CD8-positive, alpha-beta memory T cell (primary cell): ENCODE measurements at regions of chr14 and their contacts with region 1.

Region 1: GRCh38 chr14:102605025-102605424 is 12.6 kb downstream of the RCOR1 start:
- DNase-seq: no peak
- H3K4me3 ChIP-seq: no peak overlapping the region
- H3K4me3 Mint-ChIP-seq: no peak overlapping the region
- H3K27ac ChIP-seq: no peak overlapping the region
- H3K27ac Mint-ChIP-seq: no peak overlapping the region
- H3K4me1 ChIP-seq: peaks cover 6% of the 10 kb centered on the region
- H3K4me1 Mint-ChIP-seq: peaks cover 20 to 47% (median 29%) of the 10 kb centered on the region in 3 donors
- H3K27me3 ChIP-seq: no peaks in the 10 kb centered on the region
- H3K27me3 Mint-ChIP-seq: no peaks in the 10 kb centered on the region

Region 2: GRCh38 chr14:102593062-102593824 is 11.8 kb before region 1 on chr14:
- CTCF ChIA-PET with region 1: interaction called, 10 read pairs
- POLR2A ChIA-PET with region 1: no interaction called
- DNase-seq: peak; percentile 39 to 74 (median 56)
- H3K4me3 ChIP-seq: peak overlapping the region; percentile 74
- H3K4me3 Mint-ChIP-seq: peak overlapping the region; percentile 77 to 90 (median 83)
- H3K27ac ChIP-seq: peak overlapping the region; percentile 54
- H3K27ac Mint-ChIP-seq: peak overlapping the region; percentile 26 to 95 (median 82)
- H3K4me1 ChIP-seq: peaks cover 25% of the 10 kb centered on the region
- H3K4me1 Mint-ChIP-seq: peaks cover 20 to 23% (median 22%) of the 10 kb centered on the region in 3 donors
- H3K27me3 ChIP-seq: no peaks in the 10 kb centered on the region
- H3K27me3 Mint-ChIP-seq: peaks cover 0 to 2% of the 10 kb centered on the region in 2 donors

Region 3: DNA sequence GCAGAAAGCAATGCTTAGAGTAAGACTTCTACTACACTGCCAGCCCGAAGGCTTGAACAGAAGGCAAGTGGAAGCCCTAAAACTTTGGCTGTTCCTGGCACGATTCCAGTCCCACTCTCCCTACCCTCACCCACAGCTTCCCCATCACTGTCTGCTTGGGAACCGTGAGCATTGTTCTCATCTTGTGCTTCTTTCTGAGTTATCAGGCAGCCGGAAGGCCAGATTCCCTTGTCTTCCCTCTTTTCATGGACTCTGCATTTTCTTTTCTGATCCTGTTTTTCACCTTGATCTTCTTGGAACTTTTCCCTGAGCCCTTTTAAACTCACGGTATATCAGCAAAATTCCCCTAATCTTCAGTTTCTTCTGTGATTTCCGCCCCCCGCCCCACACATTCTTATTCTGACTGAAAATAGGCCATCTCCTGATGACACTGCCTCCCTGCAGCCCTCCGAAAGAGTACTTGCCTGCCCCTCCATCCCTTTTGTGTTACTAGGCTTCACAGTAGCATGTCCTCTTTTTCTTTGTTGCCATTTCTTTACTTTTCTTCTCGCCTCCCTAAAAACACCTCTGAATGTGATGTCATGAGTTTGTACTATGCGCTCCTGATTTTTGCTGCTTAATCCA is 17.3 kb after region 1 on chr14:
- CTCF ChIA-PET with region 1: no interaction called
- POLR2A ChIA-PET with region 1: no interaction called
- DNase-seq: no peak
- H3K4me3 ChIP-seq: no peak overlapping the region
- H3K4me3 Mint-ChIP-seq: peak overlapping the region in 1 of 7 donors; percentile 2
- H3K27ac ChIP-seq: no peak overlapping the region
- H3K27ac Mint-ChIP-seq: peak overlapping the region in 4 of 8 donors; percentile 7 to 29 (median 22)
- H3K4me1 ChIP-seq: peaks cover 5% of the 10 kb centered on the region
- H3K4me1 Mint-ChIP-seq: peaks cover 35 to 50% (median 43%) of the 10 kb centered on the region in 3 donors
- H3K27me3 ChIP-seq: no peaks in the 10 kb centered on the region
- H3K27me3 Mint-ChIP-seq: no peaks in the 10 kb centered on the region